Common myeloid progenitor, CD34-positive (primary cell): ENCODE measurements at regions of chr11 and their contacts with region 1.

Region 1: DNA sequence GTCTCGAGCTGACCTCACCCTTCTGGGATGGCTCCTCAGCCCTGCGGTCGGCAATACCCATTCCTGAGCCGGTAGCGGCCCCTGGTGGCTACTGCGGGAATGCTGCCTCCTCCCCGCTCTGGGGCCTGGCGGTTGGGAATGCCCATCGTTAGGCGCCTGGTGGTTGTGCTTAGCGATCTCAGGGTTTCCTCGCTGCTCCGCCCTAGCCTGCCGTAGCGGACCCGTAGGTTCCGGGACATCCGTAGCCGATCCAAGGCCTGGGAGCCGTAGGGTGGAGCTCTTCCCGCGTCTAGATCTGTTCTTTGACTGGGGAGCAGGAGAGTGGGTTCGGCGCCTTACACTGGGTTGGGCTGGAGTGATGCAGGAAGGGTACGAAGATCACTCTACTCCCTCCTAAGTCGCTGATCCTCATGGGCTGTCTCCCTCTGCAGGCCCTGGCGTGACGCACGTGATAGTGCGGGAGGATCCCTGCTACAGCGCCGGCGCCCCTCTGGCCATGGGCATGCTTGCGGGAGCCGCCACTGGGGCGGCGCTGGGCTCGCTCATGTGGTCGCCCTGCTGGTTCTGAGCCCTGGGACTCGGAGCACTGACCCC is 14.8 kb downstream of the PLEKHB1 start:
- DNase-seq: peak; percentile 69 to 80 (median 75)
- H3K4me3 ChIP-seq: peak overlapping the region in 6 of 7 experiments; percentile 40 to 81 (median 61)
- H3K27ac ChIP-seq: no peak overlapping the region
- H3K4me1 ChIP-seq: peaks cover 2 to 16% (median 14%) of the 10 kb centered on the region in 4 experiments
- H3K27me3 ChIP-seq: peaks cover 0 to 2% (median 0%) of the 10 kb centered on the region in 5 experiments

Region 2: DNA sequence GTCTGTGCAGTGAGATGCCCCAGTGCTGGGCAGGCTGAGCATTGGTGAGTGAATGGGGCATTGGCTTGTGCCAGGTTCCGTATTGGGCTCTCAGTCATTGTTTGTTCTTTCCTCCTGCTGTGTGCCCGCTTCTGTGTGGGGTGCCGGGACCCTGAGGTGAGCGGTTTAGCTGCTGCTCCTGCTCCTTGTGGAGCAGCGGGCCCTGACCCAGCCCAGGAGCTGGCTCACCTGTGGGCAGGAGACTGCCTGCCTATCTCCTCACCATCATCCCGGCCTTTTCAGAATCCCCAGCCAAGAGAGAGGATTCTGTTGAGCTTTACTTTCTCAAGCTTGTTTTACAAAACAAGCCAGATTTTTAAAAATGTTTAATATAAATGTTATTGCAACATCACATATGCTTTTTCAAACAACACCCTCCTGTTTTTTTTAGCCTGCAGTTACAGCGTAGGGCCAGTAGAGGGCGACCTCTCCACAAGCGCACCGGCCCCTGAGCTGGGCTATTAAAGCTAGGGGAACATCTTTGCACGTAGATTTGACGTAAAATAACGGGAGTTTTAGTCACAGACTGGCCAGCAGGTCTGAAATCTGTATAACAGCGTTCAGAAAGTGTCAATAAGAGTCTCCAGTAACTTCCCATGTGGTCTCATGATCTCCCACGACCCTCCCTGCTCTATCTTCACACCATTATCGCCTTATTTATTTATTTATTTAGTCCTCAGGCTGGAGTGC is 310.1 kb before region 1 on chr11:
- CTCF ChIA-PET with region 1: interaction called, 22 read pairs
- POLR2A ChIA-PET with region 1: no interaction called
- DNase-seq: peak; percentile 75 to 86 (median 83)
- H3K4me3 ChIP-seq: no peak overlapping the region
- H3K27ac ChIP-seq: no peak overlapping the region
- H3K4me1 ChIP-seq: no peaks in the 10 kb centered on the region
- H3K27me3 ChIP-seq: no peaks in the 10 kb centered on the region

Region 3: DNA sequence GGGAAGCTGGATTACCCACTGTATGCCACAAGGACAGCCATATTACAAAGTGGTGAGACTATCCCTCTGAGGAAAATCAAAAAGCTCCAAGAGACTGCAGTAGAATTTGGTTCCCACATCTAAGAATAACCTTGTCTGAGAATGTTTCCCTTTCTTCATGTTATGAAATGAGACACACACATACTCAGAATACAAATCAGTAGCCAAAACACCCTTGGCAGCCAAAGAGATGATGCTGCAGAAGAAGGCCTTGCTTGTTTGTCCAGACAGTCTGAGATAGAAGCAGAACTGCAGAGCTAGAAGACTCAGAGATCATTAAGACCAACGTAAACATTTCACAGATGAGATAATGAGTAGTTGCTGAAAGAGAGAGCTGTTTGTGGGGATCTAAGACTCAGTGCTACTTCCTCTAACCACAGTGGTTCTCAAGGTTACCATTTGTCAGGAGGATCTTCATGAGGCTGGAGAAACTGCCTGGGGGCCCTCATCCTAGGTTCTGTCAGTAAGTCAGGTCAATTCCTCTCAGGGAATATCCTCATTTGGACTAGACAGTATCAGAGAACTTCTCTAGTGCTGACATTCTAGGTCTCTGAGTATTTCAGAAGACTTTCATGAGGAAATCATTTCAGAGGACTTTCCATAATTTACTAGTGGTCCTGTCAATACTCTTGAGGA is 246.0 kb before region 1 on chr11:
- CTCF ChIA-PET with region 1: interaction called, 196 read pairs
- POLR2A ChIA-PET with region 1: no interaction called
- DNase-seq: peak in 2 of 3 donors; percentile 38 to 46
- H3K4me3 ChIP-seq: no peak overlapping the region
- H3K27ac ChIP-seq: no peak overlapping the region
- H3K4me1 ChIP-seq: peaks cover 6 to 17% (median 8%) of the 10 kb centered on the region in 4 experiments
- H3K27me3 ChIP-seq: no peaks in the 10 kb centered on the region

Region 4: DNA sequence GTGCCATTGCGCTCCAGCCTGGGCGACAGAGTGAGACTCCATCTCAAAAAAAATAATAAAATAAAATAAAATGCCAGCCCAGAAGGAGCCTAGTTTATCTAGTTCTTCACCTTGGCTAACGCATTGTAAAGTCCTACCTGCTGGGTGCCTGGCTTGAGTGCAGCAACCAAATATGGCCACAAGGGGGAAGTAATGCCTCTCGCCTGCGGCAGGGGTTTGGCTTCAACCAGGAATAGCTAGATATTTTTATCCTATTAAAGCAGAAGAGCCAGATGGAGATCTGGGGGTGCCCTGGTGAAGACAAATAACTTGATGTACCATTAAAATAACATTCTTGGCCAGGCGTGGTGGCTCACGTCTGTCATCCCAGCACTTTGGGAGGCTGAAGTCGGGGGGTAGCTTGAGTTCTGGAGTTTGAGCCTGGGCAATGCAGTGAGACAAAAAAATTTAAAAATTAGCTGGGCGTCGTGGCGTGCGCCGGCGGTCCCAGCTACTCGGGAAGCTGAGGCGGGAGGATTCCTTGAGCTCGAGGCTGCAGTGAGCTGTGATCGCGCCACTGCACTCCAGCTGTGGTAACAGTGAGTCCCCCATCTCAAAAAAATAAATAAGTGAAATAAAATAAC is 35.3 kb before region 1 on chr11:
- CTCF ChIA-PET with region 1: interaction called, 49 read pairs
- POLR2A ChIA-PET with region 1: interaction called, 3 read pairs
- DNase-seq: peak; percentile 72 to 84 (median 80)
- H3K4me3 ChIP-seq: no peak overlapping the region
- H3K27ac ChIP-seq: no peak overlapping the region
- H3K4me1 ChIP-seq: peaks cover 10 to 23% (median 18%) of the 10 kb centered on the region in 4 experiments
- H3K27me3 ChIP-seq: no peaks in the 10 kb centered on the region

Region 5: DNA sequence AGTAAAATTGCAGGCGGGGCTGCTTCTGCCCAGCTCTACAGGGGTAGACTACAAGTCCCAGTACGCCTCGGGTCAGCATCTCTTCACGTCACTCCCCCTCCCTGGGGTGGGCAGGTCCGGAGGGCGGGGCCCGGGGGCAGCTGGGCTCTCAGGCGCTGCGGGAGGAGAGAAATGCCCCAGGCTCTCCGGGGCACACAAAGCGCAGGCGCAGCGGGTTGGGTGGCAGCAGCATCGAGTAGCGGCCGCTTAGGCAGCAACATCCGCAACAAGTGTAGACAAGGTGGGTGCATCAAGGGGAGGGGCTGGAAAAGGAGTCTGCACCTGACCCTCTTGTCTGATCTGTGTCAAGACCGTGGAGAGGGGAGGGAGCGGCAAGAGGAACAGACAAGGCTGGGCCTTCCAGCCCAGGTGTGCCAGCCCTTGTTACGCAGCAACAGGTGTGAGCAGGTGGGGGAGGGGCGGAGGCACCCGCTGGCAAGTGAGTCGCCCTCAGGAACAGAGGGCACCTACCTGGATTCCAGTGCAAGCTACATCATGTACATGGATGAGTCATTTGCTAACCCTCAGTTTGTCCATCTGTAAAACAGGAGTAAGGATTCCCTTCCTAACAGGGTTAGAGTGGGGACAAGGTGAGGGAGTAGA is 13.6 kb before region 1 on chr11:
- CTCF ChIA-PET with region 1: interaction called, 48 read pairs
- POLR2A ChIA-PET with region 1: no interaction called
- DNase-seq: peak; percentile 88 to 92 (median 92)
- H3K4me3 ChIP-seq: peak overlapping the region in 3 of 7 experiments; percentile 35 to 73 (median 52)
- H3K27ac ChIP-seq: no peak overlapping the region
- H3K4me1 ChIP-seq: peaks cover 0 to 12% (median 5%) of the 10 kb centered on the region in 4 experiments
- H3K27me3 ChIP-seq: peaks cover 0 to 7% (median 0%) of the 10 kb centered on the region in 5 experiments

Region 6: DNA sequence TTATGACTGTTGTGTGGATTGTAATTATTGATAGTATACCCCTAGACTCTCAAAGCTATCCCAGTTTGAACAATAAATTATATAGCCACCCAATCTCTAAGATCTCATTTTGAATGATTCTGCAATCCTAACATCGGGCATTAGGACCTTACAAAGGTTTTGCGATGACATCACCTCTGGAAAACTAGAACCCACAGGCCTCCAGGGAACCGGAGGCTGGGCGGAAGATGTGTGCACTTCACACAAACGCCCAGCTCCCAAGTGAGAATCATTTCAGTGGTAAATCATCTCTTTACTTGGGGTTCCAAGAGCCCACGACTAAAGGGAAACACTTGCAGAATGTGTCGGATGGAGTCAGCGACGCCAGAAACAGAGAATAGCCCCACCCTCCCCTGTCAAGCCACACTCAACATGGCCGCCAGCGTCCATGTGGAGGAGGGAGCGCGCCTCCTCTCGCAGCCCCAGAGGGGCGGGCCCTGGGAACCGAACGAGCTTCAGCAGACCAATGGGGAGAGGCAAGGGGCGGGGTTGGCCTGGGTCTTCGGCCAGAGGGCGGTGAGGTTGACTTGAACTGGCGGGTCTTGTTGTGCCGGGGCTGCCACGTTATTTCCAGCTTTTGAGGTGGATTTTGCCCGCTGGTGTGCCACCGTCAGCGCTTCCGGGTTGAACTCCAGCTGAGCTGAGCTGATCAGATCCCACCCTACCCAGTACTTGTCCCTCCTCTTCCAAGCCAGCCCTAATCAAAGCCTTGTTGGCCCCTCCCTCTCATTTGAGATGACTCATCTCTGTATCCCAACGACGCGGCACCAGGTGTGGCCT is 118.2 kb after region 1 on chr11:
- CTCF ChIA-PET with region 1: no interaction called
- POLR2A ChIA-PET with region 1: no interaction called
- DNase-seq: peak; percentile 97 to 99 (median 99)
- H3K4me3 ChIP-seq: peak overlapping the region; percentile 32 to 97 (median 79)
- H3K27ac ChIP-seq: peak overlapping the region; percentile 81 to 93
- H3K4me1 ChIP-seq: peaks cover 0 to 13% (median 8%) of the 10 kb centered on the region in 4 experiments
- H3K27me3 ChIP-seq: no peaks in the 10 kb centered on the region